ENCODE measurements at regions of chr7 and their contacts with region 1.

Region 1: GRCh38 chr7:32942786-32943653 is 14.2 kb upstream of the FKBP9 start:
- DNase-seq: peak; percentile 50 to 70 (median 69)
- H3K4me3 ChIP-seq: peak overlapping the region; percentile 48 to 86 (median 80)
- H3K4me3 Mint-ChIP-seq: peak overlapping the region; percentile 80 to 97
- H3K27ac ChIP-seq: peak overlapping the region in 1 of 2 donors; percentile 70
- H3K27ac Mint-ChIP-seq: peak overlapping the region in 1 of 7 donors; percentile 58
- H3K4me1 ChIP-seq: peaks cover 11 to 24% of the 10 kb centered on the region in 2 donors
- H3K4me1 Mint-ChIP-seq: peaks cover 23% of the 10 kb centered on the region
- H3K27me3 ChIP-seq: no peaks in the 10 kb centered on the region
- H3K27me3 Mint-ChIP-seq: peaks cover 0 to 4% (median 1%) of the 10 kb centered on the region in 3 donors
- CTCF ChIP-seq: peak; percentile 69

Region 2: GRCh38 chr7:32846701-32847100 is 96.3 kb before region 1 on chr7:
- intact Hi-C with region 1: loop called (anchors 5 to 10 kb)
- DNase-seq: peak; percentile 65 to 80 (median 79)
- H3K4me3 ChIP-seq: peak overlapping the region in 1 of 3 experiments; percentile 31
- H3K4me3 Mint-ChIP-seq: peak overlapping the region in 1 of 2 donors; percentile 63
- H3K27ac ChIP-seq: no peak overlapping the region
- H3K27ac Mint-ChIP-seq: no peak overlapping the region
- H3K4me1 ChIP-seq: peaks cover 0 to 3% of the 10 kb centered on the region in 2 donors
- H3K4me1 Mint-ChIP-seq: peaks cover 9% of the 10 kb centered on the region
- H3K27me3 ChIP-seq: no peaks in the 10 kb centered on the region
- H3K27me3 Mint-ChIP-seq: peaks cover 0 to under 1% (median 0%) of the 10 kb centered on the region in 3 donors
- CTCF ChIP-seq: peak; percentile 92

Region 3: DNA sequence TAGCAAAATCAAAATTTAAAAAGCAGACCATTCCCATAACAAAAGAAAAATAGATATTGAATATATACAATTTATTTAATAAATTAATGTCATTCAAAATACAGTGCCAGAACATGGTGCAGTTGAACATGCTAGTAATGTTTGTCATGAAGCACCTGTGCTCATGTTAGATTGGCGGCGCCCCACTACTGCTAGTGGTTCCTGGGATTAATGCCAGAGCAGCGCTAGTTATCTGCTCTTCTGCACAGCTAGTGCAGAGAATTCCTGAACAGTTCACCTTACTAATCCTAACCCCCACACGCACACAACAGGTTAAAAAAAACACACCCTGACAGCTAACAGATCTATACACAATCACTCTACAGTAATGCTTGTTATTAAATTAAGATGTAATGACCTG is 74.9 kb before region 1 on chr7:
- intact Hi-C with region 1: no loop called
- DNase-seq: no peak
- H3K4me3 ChIP-seq: no peak overlapping the region
- H3K4me3 Mint-ChIP-seq: no peak overlapping the region
- H3K27ac ChIP-seq: no peak overlapping the region
- H3K27ac Mint-ChIP-seq: peak overlapping the region in 1 of 7 donors; percentile 4
- H3K4me1 ChIP-seq: no peaks in the 10 kb centered on the region
- H3K4me1 Mint-ChIP-seq: peaks cover 2% of the 10 kb centered on the region
- H3K27me3 ChIP-seq: no peaks in the 10 kb centered on the region
- H3K27me3 Mint-ChIP-seq: peaks cover 0 to 1% (median 0%) of the 10 kb centered on the region in 3 donors
- CTCF ChIP-seq: no peak

Region 4: GRCh38 chr7:32881074-32882017 is 61.7 kb before region 1 on chr7:
- intact Hi-C with region 1: loop called in 1 of 2 experiments (anchors 10 kb)
- DNase-seq: no peak
- H3K4me3 ChIP-seq: no peak overlapping the region
- H3K4me3 Mint-ChIP-seq: no peak overlapping the region
- H3K27ac ChIP-seq: peak overlapping the region in 1 of 2 donors; percentile 25
- H3K27ac Mint-ChIP-seq: peak overlapping the region in 3 of 7 donors; percentile 22 to 60 (median 46)
- H3K4me1 ChIP-seq: no peaks in the 10 kb centered on the region
- H3K4me1 Mint-ChIP-seq: peaks cover 26% of the 10 kb centered on the region
- H3K27me3 ChIP-seq: no peaks in the 10 kb centered on the region
- H3K27me3 Mint-ChIP-seq: no peaks in the 10 kb centered on the region
- CTCF ChIP-seq: no peak

Region 5: DNA sequence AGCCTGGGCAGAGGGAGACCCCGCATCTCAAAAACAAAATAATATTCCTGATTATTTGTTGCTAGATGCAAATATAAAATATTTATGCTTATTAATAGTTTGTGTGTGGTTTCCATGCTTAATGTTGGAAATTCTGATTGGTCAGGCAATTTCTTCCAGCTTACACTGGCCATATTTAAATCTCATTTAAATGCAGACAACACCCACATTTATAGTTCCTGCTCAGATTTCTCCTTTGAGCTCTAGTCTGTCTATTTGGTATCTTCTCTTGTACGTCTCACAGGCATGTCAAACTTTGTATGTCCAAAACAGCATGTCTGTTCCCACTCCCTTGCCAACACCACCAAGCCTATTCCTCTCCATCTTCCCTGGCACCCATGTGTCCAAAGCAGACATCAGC is 66.7 kb after region 1 on chr7:
- intact Hi-C with region 1: no loop called
- DNase-seq: no peak
- H3K4me3 ChIP-seq: no peak overlapping the region
- H3K4me3 Mint-ChIP-seq: no peak overlapping the region
- H3K27ac ChIP-seq: peak overlapping the region in 1 of 2 donors; percentile 7
- H3K27ac Mint-ChIP-seq: no peak overlapping the region
- H3K4me1 ChIP-seq: no peaks in the 10 kb centered on the region
- H3K4me1 Mint-ChIP-seq: no peaks in the 10 kb centered on the region
- H3K27me3 ChIP-seq: no peaks in the 10 kb centered on the region
- H3K27me3 Mint-ChIP-seq: no peaks in the 10 kb centered on the region
- CTCF ChIP-seq: no peak

Region 6: GRCh38 chr7:33091641-33092192 is 148.7 kb after region 1 on chr7:
- intact Hi-C with region 1: no loop called
- DNase-seq: no peak
- H3K4me3 ChIP-seq: no peak overlapping the region
- H3K4me3 Mint-ChIP-seq: no peak overlapping the region
- H3K27ac ChIP-seq: no peak overlapping the region
- H3K27ac Mint-ChIP-seq: no peak overlapping the region
- H3K4me1 ChIP-seq: no peaks in the 10 kb centered on the region
- H3K4me1 Mint-ChIP-seq: no peaks in the 10 kb centered on the region
- H3K27me3 ChIP-seq: no peaks in the 10 kb centered on the region
- H3K27me3 Mint-ChIP-seq: peaks cover 0 to 2% (median 0%) of the 10 kb centered on the region in 3 donors
- CTCF ChIP-seq: no peak